Left colon (tissue), 2 donors: ENCODE measurements at regions of chr3 and their contacts with region 1.

Region 1: DNA sequence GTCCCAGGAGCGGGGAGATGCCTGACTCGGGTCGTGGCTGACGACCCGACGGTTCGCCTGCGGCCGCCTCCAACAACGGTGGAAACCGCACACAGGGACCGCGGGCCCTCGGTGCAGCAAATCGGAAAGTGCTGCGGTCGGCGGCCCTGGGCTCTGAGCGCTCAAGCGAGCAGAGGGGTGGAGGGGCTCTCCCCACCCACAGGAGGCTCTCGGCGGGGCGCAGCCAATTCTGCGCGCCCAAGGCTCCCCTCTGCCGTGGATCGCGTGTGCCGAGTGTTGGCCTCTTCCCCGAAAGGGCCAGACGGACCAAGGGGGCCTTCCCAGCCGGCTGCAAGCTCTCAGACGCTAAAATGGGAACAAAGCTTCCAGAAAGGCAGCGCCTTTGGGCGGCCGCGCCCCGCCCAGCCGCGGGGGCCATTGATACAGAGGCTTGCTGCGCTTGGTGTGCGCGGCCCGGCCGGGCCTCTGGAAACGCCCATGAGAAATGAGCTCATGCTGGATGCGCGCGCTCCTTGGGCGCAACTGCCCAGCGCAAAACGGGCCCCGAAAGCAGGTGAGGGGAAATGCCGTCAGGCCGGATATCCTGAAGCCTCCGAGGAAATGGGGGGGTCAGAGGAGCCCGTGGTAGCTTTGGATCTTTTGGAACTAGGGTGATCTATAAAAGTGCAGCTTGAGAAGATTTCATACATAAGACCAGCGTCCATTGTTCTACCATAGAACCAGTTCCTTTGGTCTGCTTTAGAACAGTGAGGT is 1.2 kb upstream of the GSK3B start:
- DNase-seq: peak; percentile 94
- ATAC-seq: peak; percentile 66

Region 2: DNA sequence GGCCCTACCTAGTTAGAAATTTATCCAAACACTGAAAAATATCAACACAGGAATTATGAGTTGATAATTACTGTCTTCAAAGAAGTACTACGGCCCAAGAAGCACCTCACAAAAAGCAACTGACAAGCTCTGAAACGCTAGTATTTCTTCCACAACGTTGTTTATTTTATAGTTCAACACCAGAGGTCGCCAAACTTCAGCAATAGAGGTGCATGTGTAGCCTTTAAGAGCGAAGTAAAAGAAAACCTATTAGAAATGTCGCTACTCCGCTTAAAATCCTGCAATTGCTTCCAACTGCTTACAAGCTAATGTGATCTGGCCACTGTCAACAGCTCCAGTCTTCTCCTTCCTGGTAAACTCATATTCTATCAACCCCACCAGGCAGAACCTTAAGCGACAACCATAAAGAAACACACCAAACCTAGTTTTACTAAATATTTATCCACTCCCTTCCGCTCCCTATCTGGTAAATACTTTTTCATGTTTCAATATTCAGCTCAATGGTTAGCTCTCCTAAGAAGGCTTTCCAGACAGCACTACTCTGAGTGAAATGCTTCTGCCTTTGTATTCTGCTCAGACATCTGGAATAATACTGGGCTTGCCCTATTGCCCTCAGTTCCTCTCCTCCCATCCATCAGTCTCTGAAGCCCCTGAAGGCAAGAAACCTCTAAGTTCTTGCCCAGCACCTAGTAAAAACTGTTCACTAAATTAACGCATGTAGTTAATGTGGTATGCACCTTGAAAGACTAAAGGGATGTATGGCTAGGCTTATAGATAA is 203.3 kb before region 1 on chr3:
- intact Hi-C with region 1: loop called in 1 of 2 experiments (anchors 5 kb)
- DNase-seq: no peak
- ATAC-seq: peak; percentile 75

Region 3: DNA sequence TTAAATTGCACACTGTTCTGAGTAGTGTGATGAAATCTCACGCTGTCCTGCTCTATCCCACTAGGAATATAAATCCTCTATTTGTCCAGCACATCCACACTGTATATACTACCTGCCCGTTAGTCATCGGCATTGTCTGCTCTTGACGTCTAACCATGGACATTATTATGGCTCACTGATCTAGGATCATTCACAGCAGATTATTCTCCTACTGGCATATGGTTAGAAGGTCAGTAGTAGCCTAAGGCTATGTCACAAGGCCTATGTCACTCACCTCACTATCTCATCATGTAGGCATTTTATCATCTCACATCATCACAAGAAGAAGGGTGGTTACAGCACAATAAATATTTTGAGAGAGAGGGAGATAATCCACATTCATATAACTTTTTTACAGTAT is 122.1 kb before region 1 on chr3:
- intact Hi-C with region 1: no loop called
- DNase-seq: no peak
- ATAC-seq: no peak

Region 4: GRCh38 chr3:120369000-120369399 is 273.6 kb after region 1 on chr3:
- intact Hi-C with region 1: no loop called
- DNase-seq: no peak
- ATAC-seq: no peak